Naive thymus-derived CD4-positive, alpha-beta T cell (primary cell): ENCODE measurements at regions of chr20 and their contacts with region 1.

Region 1: GRCh38 chr20:23350196-23350903 is at the start of gene NXT1:
- DNase-seq: peak; percentile 92 to 98 (median 95)
- ATAC-seq: peak; percentile 91
- H3K4me3 ChIP-seq: peak within 1 kb of the TSS; percentile 99
- H3K4me3 Mint-ChIP-seq: peak within 1 kb of the TSS; percentile 84 to 100 (median 98)
- H3K27ac ChIP-seq: peak within 1 kb of the TSS; percentile 99
- H3K27ac Mint-ChIP-seq: peak within 1 kb of the TSS; percentile 98 to 100 (median 100)
- H3K4me1 ChIP-seq: peaks cover 19 to 20% of the 10 kb centered on the region in 2 donors
- H3K4me1 Mint-ChIP-seq: peaks cover 12 to 36% (median 26%) of the 10 kb centered on the region in 7 donors
- H3K27me3 ChIP-seq: no peaks in the 10 kb centered on the region
- H3K27me3 Mint-ChIP-seq: peaks cover 0 to 2% (median 0%) of the 10 kb centered on the region in 5 donors
- total RNA-seq, gene NXT1: 20.1 to 63.4 (median 39.7) TPM

Region 2: DNA sequence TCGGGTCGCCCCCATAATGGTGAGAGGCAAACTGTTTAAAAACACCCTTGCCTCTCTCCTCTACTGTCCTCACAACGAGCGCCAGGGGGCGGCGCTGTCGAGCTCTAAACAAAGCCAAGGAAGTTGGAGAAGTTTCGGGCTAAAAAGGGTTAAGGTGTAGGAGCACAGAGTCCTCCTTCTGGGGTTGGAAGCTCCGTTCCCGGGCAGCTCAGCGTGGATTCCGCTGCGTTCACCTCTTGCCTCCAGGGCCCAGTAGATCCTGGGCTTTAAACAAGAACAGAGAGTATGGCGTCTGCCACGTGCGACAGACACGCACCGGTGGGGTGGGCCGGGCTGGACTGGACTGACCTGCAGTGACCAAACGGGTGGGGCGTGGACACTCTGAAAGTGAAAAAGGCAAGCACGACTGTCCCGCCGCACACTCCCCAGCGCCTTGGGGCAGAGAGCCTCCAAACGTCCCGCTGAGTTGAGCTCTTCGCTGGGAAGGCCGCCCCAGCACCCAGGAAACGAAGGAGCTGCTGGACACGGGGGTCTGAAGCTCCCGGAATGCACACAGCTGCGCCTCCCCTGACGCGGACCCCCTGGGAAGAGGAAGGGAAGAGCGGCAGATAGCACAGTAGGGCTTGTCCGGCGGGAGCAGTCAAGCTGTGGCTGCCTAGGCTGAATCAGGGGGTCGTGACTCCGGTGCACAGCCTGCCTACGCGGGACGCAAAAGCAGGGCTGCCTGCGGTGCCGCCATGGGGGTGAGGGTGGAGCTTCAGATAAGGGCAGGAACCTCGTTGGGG is 299.3 kb before region 1 on chr20:
- CTCF ChIA-PET with region 1: no interaction called
- POLR2A ChIA-PET with region 1: no interaction called
- intact Hi-C with region 1: loop called in 1 of 2 experiments (anchors 10 kb)
- DNase-seq: peak in 2 of 9 donors; percentile 20 to 51
- ATAC-seq: peak; percentile 49
- H3K4me3 ChIP-seq: no peak overlapping the region
- H3K4me3 Mint-ChIP-seq: peak overlapping the region in 2 of 10 donors; percentile 44 to 52
- H3K27ac ChIP-seq: no peak overlapping the region
- H3K27ac Mint-ChIP-seq: no peak overlapping the region
- H3K4me1 ChIP-seq: no peaks in the 10 kb centered on the region
- H3K4me1 Mint-ChIP-seq: peaks cover 0 to 15% (median 6%) of the 10 kb centered on the region in 7 donors
- H3K27me3 ChIP-seq: peaks cover 0 to 2% of the 10 kb centered on the region in 2 donors
- H3K27me3 Mint-ChIP-seq: peaks cover 34 to 68% (median 53%) of the 10 kb centered on the region in 5 donors

Region 3: GRCh38 chr20:23334111-23334510 is 16.2 kb before region 1 on chr20:
- CTCF ChIA-PET with region 1: no interaction called
- POLR2A ChIA-PET with region 1: no interaction called
- intact Hi-C with region 1: no loop called
- DNase-seq: no peak
- ATAC-seq: no peak
- H3K4me3 ChIP-seq: no peak overlapping the region
- H3K4me3 Mint-ChIP-seq: no peak overlapping the region
- H3K27ac ChIP-seq: no peak overlapping the region
- H3K27ac Mint-ChIP-seq: no peak overlapping the region
- H3K4me1 ChIP-seq: no peaks in the 10 kb centered on the region
- H3K4me1 Mint-ChIP-seq: peaks cover 0 to 20% (median 0%) of the 10 kb centered on the region in 7 donors
- H3K27me3 ChIP-seq: no peaks in the 10 kb centered on the region
- H3K27me3 Mint-ChIP-seq: peaks cover 0 to 1% (median 0%) of the 10 kb centered on the region in 5 donors

Region 4: GRCh38 chr20:23401051-23401450 is 50.7 kb after region 1 on chr20:
- CTCF ChIA-PET with region 1: no interaction called
- POLR2A ChIA-PET with region 1: no interaction called
- intact Hi-C with region 1: no loop called
- DNase-seq: no peak
- ATAC-seq: no peak
- H3K4me3 ChIP-seq: no peak overlapping the region
- H3K4me3 Mint-ChIP-seq: no peak overlapping the region
- H3K27ac ChIP-seq: no peak overlapping the region
- H3K27ac Mint-ChIP-seq: peak overlapping the region in 2 of 9 donors; percentile 3 to 40
- H3K4me1 ChIP-seq: no peaks in the 10 kb centered on the region
- H3K4me1 Mint-ChIP-seq: peaks cover 6 to 72% (median 12%) of the 10 kb centered on the region in 7 donors
- H3K27me3 ChIP-seq: no peaks in the 10 kb centered on the region
- H3K27me3 Mint-ChIP-seq: no peaks in the 10 kb centered on the region

Region 5: GRCh38 chr20:23420943-23421931 is 70.9 kb after region 1 on chr20 and contains the start of gene NAPB:
- CTCF ChIA-PET with region 1: interaction called, 22 read pairs
- POLR2A ChIA-PET with region 1: interaction called, 30 read pairs
- intact Hi-C with region 1: loop called (anchors 1 kb)
- DNase-seq: peak; percentile 82 to 93 (median 91)
- ATAC-seq: peak; percentile 99
- H3K4me3 ChIP-seq: peak within 1 kb of the TSS; percentile 84
- H3K4me3 Mint-ChIP-seq: peak within 1 kb of the TSS; percentile 86 to 96 (median 92)
- H3K27ac ChIP-seq: peak within 1 kb of the TSS; percentile 87
- H3K27ac Mint-ChIP-seq: peak within 1 kb of the TSS; percentile 55 to 95 (median 89)
- H3K4me1 ChIP-seq: peaks cover 7 to 22% of the 10 kb centered on the region in 2 donors
- H3K4me1 Mint-ChIP-seq: peaks cover 21 to 55% (median 39%) of the 10 kb centered on the region in 7 donors
- H3K27me3 ChIP-seq: no peaks in the 10 kb centered on the region
- H3K27me3 Mint-ChIP-seq: peaks cover 0 to 11% (median 6%) of the 10 kb centered on the region in 5 donors
- total RNA-seq, gene NAPB: 11.4 to 20.4 (median 16.2) TPM

Region 6: DNA sequence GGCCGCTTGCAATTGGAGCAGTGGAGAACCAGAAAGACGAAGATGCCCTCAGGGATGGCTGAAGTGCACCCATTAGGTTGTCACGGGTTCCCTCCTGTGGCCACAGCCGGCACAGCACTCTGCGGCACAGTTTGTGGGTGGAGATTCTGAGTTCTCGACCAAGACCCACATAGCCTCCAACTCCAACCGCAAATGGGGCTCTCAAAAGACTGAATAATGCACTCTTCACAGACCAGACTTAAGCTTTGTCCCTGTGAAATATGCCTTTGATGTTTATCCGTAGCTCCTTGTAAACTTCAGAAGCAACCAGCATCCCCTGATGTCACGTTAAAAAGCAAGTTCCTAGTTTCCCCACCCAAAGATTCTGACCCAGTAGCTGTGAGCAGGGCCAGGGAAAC is 256.3 kb after region 1 on chr20:
- CTCF ChIA-PET with region 1: interaction called, 4 read pairs
- POLR2A ChIA-PET with region 1: no interaction called
- intact Hi-C with region 1: loop called in 1 of 2 experiments (anchors 1 kb)
- DNase-seq: peak; percentile 15 to 63 (median 39)
- ATAC-seq: peak; percentile 86
- H3K4me3 ChIP-seq: no peak overlapping the region
- H3K4me3 Mint-ChIP-seq: no peak overlapping the region
- H3K27ac ChIP-seq: no peak overlapping the region
- H3K27ac Mint-ChIP-seq: no peak overlapping the region
- H3K4me1 ChIP-seq: no peaks in the 10 kb centered on the region
- H3K4me1 Mint-ChIP-seq: peaks cover 0 to 4% (median 0%) of the 10 kb centered on the region in 7 donors
- H3K27me3 ChIP-seq: no peaks in the 10 kb centered on the region
- H3K27me3 Mint-ChIP-seq: peaks cover 4 to 7% (median 5%) of the 10 kb centered on the region in 5 donors